Activated B cell treated with CpG ODN at 0.5 μM for 24 hours (primary cell): ENCODE measurements at regions of chr4 and their contacts with region 1.

Region 1: GRCh38 chr4:184538023-184538599 is 63.8 kb upstream of the IRF2 start:
- DNase-seq: peak; percentile 54
- ATAC-seq: peak; percentile 68
- H3K4me3 Mint-ChIP-seq: peak overlapping the region; percentile 96
- H3K27ac Mint-ChIP-seq: peak overlapping the region; percentile 100
- H3K4me1 Mint-ChIP-seq: peaks cover 49% of the 10 kb centered on the region
- H3K27me3 Mint-ChIP-seq: no peaks in the 10 kb centered on the region
- CTCF ChIP-seq: no peak

Region 2: GRCh38 chr4:184282251-184282713 is 255.8 kb before region 1 on chr4:
- CTCF ChIA-PET with region 1: interaction called, 5 read pairs
- POLR2A ChIA-PET with region 1: interaction called, 17 read pairs
- intact Hi-C with region 1: loop called (anchors 1 kb)
- DNase-seq: no peak
- ATAC-seq: peak; percentile 40
- H3K4me3 Mint-ChIP-seq: peak overlapping the region; percentile 32
- H3K27ac Mint-ChIP-seq: peak overlapping the region; percentile 83
- H3K4me1 Mint-ChIP-seq: peaks cover 66% of the 10 kb centered on the region
- H3K27me3 Mint-ChIP-seq: no peaks in the 10 kb centered on the region
- CTCF ChIP-seq: no peak

Region 3: DNA sequence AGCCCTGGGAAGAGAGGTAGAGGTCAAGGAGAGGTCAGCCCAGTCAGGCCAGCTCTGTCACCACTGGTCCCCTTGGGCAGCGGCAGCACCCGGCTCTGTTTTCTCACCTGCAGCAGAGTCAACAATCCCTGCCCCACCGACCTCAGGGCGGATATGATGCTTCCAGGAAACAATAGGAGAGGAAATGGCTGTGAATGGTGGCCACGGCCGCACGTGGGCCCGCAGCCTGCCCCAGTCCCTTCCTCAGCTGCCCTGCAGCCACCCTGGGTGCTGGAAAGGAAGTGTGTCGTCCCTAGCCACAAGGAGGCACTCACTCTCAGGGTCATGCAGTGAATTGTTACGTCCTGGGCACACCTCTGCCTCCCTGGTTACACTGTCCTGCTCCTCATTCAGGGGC is 227.9 kb before region 1 on chr4:
- CTCF ChIA-PET with region 1: interaction called, 5 read pairs
- POLR2A ChIA-PET with region 1: interaction called, 15 read pairs
- intact Hi-C with region 1: loop called (anchors 1 kb)
- DNase-seq: no peak
- ATAC-seq: peak; percentile 23
- H3K4me3 Mint-ChIP-seq: no peak overlapping the region
- H3K27ac Mint-ChIP-seq: peak overlapping the region; percentile 51
- H3K4me1 Mint-ChIP-seq: peaks cover 61% of the 10 kb centered on the region
- H3K27me3 Mint-ChIP-seq: no peaks in the 10 kb centered on the region
- CTCF ChIP-seq: no peak

Region 4: GRCh38 chr4:184343502-184344177 is 194.5 kb before region 1 on chr4:
- CTCF ChIA-PET with region 1: no interaction called
- POLR2A ChIA-PET with region 1: interaction called, 13 read pairs
- intact Hi-C with region 1: no loop called
- DNase-seq: peak; percentile 39
- ATAC-seq: peak; percentile 50
- H3K4me3 Mint-ChIP-seq: peak overlapping the region; percentile 86
- H3K27ac Mint-ChIP-seq: peak overlapping the region; percentile 83
- H3K4me1 Mint-ChIP-seq: peaks cover 73% of the 10 kb centered on the region
- H3K27me3 Mint-ChIP-seq: no peaks in the 10 kb centered on the region
- CTCF ChIP-seq: no peak

Region 5: DNA sequence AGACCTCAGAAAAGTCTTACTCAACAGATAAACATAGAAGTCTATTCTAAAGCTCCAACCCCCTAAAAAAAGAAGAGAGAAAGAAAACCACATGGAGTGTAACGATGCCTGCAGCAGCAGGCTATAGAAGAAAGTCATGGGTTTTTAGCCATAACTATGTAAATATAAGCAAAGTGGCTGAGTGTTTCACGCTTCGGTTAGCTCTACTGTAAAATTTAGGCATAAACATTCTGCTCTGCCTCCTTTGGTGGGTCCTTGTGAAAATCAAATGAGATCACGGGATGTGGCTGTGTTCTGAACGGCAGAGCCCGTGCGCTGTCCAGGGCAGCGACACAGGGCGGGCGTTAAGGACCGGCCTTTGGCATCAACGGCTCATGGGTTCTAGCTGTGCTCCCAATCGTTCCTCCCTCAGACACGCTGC is 142.1 kb before region 1 on chr4:
- CTCF ChIA-PET with region 1: interaction called, 3 read pairs
- POLR2A ChIA-PET with region 1: interaction called, 6 read pairs
- intact Hi-C with region 1: loop called (anchors 1 kb)
- DNase-seq: no peak
- ATAC-seq: peak; percentile 77
- H3K4me3 Mint-ChIP-seq: peak overlapping the region; percentile 81
- H3K27ac Mint-ChIP-seq: peak overlapping the region; percentile 95
- H3K4me1 Mint-ChIP-seq: peaks cover 46% of the 10 kb centered on the region
- H3K27me3 Mint-ChIP-seq: no peaks in the 10 kb centered on the region
- CTCF ChIP-seq: no peak

Region 6: DNA sequence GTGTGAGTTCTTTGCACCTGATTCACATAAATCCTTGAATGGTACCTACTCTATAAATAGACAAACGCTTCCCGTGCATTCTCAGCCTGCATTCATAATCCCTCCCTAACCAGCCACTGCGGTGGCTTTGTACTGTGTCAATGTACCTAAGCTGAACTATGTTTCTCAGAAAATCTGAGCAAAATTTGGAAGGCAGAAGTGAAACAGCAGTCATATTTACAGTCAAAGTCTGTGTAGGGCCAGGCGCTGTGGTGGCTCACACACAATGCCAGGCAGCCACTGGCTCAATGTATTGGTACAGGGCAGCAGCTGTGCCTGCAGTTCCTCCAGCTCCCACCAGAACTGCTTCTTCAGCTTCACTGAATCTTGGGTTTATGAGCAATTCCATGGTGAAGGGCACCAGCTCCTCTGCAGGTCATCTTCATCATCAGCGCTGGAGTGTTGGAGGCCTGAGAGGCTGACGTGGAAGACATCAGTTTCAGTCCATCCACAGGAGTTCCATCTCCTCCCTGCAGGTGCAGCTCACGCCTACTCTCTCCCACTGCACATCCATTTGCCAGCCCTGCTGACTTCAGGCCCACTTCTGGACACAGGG is 31.5 kb before region 1 on chr4:
- CTCF ChIA-PET with region 1: interaction called, 8 read pairs
- POLR2A ChIA-PET with region 1: interaction called, 25 read pairs
- intact Hi-C with region 1: loop called (anchors 1 kb)
- DNase-seq: peak; percentile 38
- ATAC-seq: peak; percentile 98
- H3K4me3 Mint-ChIP-seq: peak overlapping the region; percentile 67
- H3K27ac Mint-ChIP-seq: peak overlapping the region; percentile 88
- H3K4me1 Mint-ChIP-seq: peaks cover 58% of the 10 kb centered on the region
- H3K27me3 Mint-ChIP-seq: no peaks in the 10 kb centered on the region
- CTCF ChIP-seq: no peak

Region 7: GRCh38 chr4:184733654-184734524 is 195.8 kb after region 1 on chr4 and contains the start of gene CENPU:
- CTCF ChIA-PET with region 1: no interaction called
- POLR2A ChIA-PET with region 1: interaction called, 4 read pairs
- intact Hi-C with region 1: loop called (anchors 1 kb)
- DNase-seq: peak; percentile 95
- ATAC-seq: peak; percentile 96
- H3K4me3 Mint-ChIP-seq: peak within 1 kb of the TSS; percentile 88
- H3K27ac Mint-ChIP-seq: peak within 1 kb of the TSS; percentile 85
- H3K4me1 Mint-ChIP-seq: peaks cover 19% of the 10 kb centered on the region
- H3K27me3 Mint-ChIP-seq: no peaks in the 10 kb centered on the region
- CTCF ChIP-seq: no peak
- total RNA-seq, gene CENPU: 7.0 and 7.1 TPM in 2 replicates